CD14-positive monocyte (primary cell): ENCODE measurements at regions of chr20 and their contacts with region 1.

Region 1: DNA sequence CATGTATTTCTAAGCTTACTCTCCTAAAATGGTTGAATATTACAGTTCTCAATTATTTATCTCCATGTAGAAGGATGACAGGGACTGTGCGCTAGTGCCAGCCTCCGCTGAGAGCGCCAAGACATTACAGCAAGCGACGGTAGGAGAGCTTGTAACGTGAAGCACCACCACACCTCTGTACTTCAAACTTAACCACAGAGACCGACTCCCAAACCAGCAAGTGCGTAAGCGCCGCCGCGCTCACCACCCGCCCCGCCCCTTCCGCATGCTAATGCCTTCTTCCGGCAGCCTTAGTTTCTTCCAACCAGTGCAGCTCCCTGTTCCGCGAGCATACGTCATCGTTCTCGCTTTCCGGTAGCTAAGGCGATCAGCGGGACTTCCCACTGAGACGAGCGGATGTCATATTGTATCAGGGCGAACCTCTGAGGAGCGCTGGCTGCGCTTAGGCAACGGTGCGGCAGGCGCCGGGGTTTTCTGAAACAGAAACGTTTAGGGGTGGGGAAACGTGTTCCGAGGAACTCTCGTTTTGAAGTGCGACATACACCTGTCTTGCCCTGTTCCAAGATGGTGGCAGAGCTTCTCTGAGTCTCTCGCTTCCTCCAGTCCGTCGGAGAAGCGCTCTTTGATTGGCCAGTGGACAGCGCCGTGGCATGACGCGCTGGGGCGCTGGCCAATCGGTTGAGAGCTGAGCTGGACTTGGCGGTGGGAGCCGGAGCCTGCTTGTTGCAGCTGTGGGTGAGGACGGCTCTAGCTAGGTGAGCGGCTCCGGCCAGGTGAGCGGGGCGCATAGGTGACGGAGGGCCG is at the start of gene SEC23B:
- DNase-seq: peak; percentile 95 to 98 (median 97)
- H3K4me3 ChIP-seq: peak within 1 kb of the TSS; percentile 62 to 92 (median 83)
- H3K4me3 Mint-ChIP-seq: peak within 1 kb of the TSS; percentile 93 to 99
- H3K27ac ChIP-seq: peak within 1 kb of the TSS; percentile 97 to 98
- H3K27ac Mint-ChIP-seq: peak within 1 kb of the TSS; percentile 100
- H3K4me1 ChIP-seq: peaks cover 45 to 53% of the 10 kb centered on the region in 2 donors
- H3K4me1 Mint-ChIP-seq: peaks cover 48% of the 10 kb centered on the region
- H3K27me3 ChIP-seq: no peaks in the 10 kb centered on the region
- H3K27me3 Mint-ChIP-seq: peaks cover 0 to 6% (median 1%) of the 10 kb centered on the region in 3 donors
- CTCF ChIP-seq: no peak
- polyA plus RNA-seq, gene SEC23B: 38.9 to 88.1 (median 68.4) TPM

Region 2: DNA sequence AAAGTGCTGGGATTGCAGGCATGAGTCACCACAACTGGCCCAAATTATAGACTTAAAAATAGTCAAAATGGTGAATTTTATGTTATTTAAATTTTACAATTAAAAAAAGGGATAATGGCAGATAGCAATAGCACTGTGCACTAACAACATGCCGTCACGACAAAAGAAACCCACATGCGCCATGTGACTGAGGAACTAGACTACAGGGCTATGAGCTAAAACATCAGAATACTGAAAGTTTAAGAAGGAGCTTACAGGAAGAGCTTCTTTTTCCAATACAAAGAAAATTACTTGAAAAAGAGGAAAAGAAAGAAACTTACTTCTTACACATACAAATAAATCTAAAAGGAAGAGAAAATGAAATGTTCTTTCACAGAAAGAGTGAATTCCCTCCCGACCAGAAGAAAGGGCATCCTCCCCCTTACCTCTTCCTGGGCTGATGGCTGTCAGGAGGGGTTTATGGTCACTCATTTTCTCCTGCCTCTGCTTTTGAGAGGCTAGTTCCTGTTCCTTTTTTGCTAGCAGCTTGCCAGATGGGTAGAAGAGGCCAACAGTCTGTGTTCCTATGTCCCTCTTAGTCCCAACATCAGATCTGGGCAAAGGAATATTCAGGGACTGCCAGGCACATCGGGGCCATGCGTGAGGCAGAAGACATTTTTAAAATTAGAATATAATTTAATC is 95.1 kb before region 1 on chr20:
- intact Hi-C with region 1: loop called in 1 of 2 experiments (anchors 10 kb)
- DNase-seq: peak; percentile 26 to 45 (median 37)
- H3K4me3 ChIP-seq: peak overlapping the region; percentile 22 to 64 (median 44)
- H3K4me3 Mint-ChIP-seq: peak overlapping the region; percentile 56 to 79
- H3K27ac ChIP-seq: peak overlapping the region; percentile 47 to 81
- H3K27ac Mint-ChIP-seq: peak overlapping the region; percentile 81 to 88 (median 85)
- H3K4me1 ChIP-seq: peaks cover 21 to 22% of the 10 kb centered on the region in 2 donors
- H3K4me1 Mint-ChIP-seq: peaks cover 27% of the 10 kb centered on the region
- H3K27me3 ChIP-seq: no peaks in the 10 kb centered on the region
- H3K27me3 Mint-ChIP-seq: no peaks in the 10 kb centered on the region
- CTCF ChIP-seq: no peak

Region 3: GRCh38 chr20:18466894-18467730 is 40.3 kb before region 1 on chr20 and contains the starts of genes DZANK1 and POLR3F:
- intact Hi-C with region 1: loop called (anchors 2 to 5 kb)
- DNase-seq: peak; percentile 89 to 92 (median 90)
- H3K4me3 ChIP-seq: peak within 1 kb of the TSS; percentile 45 to 100 (median 70)
- H3K4me3 Mint-ChIP-seq: peak within 1 kb of the TSS; percentile 97 to 98
- H3K27ac ChIP-seq: peak within 1 kb of the TSS; percentile 43 to 92
- H3K27ac Mint-ChIP-seq: peak within 1 kb of the TSS; percentile 93 to 99 (median 97)
- H3K4me1 ChIP-seq: peaks cover 14 to 22% of the 10 kb centered on the region in 2 donors
- H3K4me1 Mint-ChIP-seq: peaks cover 15% of the 10 kb centered on the region
- H3K27me3 ChIP-seq: no peaks in the 10 kb centered on the region
- H3K27me3 Mint-ChIP-seq: peaks cover 0 to 2% (median 0%) of the 10 kb centered on the region in 3 donors
- CTCF ChIP-seq: no peak
- polyA plus RNA-seq, gene DZANK1: 0.17 to 1.3 (median 0.69) TPM
- polyA plus RNA-seq, gene POLR3F: 4.1 to 6.7 (median 4.8) TPM

Region 4: GRCh38 chr20:18566892-18567742 is 59.7 kb after region 1 on chr20 and contains the start of gene SMIM26:
- intact Hi-C with region 1: loop called (anchors 5 kb)
- DNase-seq: peak; percentile 76 to 84 (median 83)
- H3K4me3 ChIP-seq: peak within 1 kb of the TSS; percentile 77 to 93 (median 79)
- H3K4me3 Mint-ChIP-seq: peak within 1 kb of the TSS; percentile 92
- H3K27ac ChIP-seq: peak within 1 kb of the TSS; percentile 56 to 95
- H3K27ac Mint-ChIP-seq: peak within 1 kb of the TSS; percentile 93 to 99 (median 97)
- H3K4me1 ChIP-seq: peaks cover 26 to 34% of the 10 kb centered on the region in 2 donors
- H3K4me1 Mint-ChIP-seq: peaks cover 28% of the 10 kb centered on the region
- H3K27me3 ChIP-seq: no peaks in the 10 kb centered on the region
- H3K27me3 Mint-ChIP-seq: peaks cover 0 to 2% (median 0%) of the 10 kb centered on the region in 3 donors
- CTCF ChIP-seq: no peak
- polyA plus RNA-seq, gene SMIM26: 101 to 206 (median 176) TPM

Region 5: GRCh38 chr20:19249106-19249879 is 741.9 kb after region 1 on chr20:
- intact Hi-C with region 1: loop called in 1 of 2 experiments (anchors 5 kb)
- DNase-seq: peak; percentile 82 to 94 (median 92)
- H3K4me3 ChIP-seq: no peak overlapping the region
- H3K4me3 Mint-ChIP-seq: peak overlapping the region; percentile 25 to 46
- H3K27ac ChIP-seq: peak overlapping the region in 1 of 2 donors; percentile 50
- H3K27ac Mint-ChIP-seq: peak overlapping the region; percentile 46 to 89 (median 67)
- H3K4me1 ChIP-seq: peaks cover 44 to 47% of the 10 kb centered on the region in 2 donors
- H3K4me1 Mint-ChIP-seq: peaks cover 47% of the 10 kb centered on the region
- H3K27me3 ChIP-seq: no peaks in the 10 kb centered on the region
- H3K27me3 Mint-ChIP-seq: peaks cover 0 to 2% (median 0%) of the 10 kb centered on the region in 3 donors
- CTCF ChIP-seq: peak; percentile 20